ENCODE measurements at regions of chr1 and their contacts with region 1.

Region 1: GRCh38 chr1:205248793-205249601 is 21.3 kb downstream of the TMCC2 start:
- DNase-seq: no peak
- H3K4me3 ChIP-seq: no peak overlapping the region
- H3K4me3 Mint-ChIP-seq: no peak overlapping the region
- H3K27ac ChIP-seq: no peak overlapping the region
- H3K27ac Mint-ChIP-seq: no peak overlapping the region
- H3K4me1 ChIP-seq: no peaks in the 10 kb centered on the region
- H3K4me1 Mint-ChIP-seq: peaks cover 1% of the 10 kb centered on the region
- H3K27me3 ChIP-seq: no peaks in the 10 kb centered on the region
- H3K27me3 Mint-ChIP-seq: peaks cover 0 to 9% (median 2%) of the 10 kb centered on the region in 3 donors
- CTCF ChIP-seq: no peak

Region 2: DNA sequence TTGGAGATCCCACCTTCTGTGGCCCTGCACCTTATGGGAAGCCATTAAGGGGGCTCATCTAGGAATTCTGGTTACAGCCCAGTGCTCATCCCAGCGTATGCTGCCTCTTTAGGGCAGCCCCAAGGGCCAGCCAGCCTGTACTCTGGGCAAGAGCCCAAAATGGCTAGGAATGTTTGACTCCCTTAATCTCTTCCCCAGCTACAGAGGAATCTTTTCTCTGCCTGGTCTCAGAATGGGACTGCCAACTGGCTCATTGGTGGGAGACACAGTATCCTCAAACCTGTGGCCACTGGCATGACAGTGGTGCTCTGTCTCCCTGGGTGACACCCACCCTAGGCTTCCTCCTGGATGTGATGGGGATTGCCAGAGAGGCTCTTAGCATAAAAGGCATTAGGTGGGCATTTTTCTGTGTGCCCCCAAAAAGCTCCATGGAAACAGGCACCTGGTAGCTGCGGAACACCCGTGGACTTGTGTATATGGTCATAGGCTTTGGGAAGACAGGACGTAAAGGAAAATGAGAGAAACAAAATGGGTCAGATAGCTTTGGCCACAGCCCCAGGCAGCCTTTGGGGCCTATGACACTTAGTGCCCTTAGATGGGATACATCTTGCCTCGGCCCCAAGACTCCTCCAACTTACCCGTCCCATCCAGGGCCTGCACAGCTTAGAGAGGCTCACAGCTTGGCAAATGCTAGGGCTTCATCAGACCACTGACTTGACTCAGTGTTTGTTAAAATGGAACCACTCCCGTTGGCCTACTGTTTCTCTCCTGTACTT is 171.7 kb before region 1 on chr1:
- intact Hi-C with region 1: no loop called
- DNase-seq: no peak
- H3K4me3 ChIP-seq: no peak overlapping the region
- H3K4me3 Mint-ChIP-seq: no peak overlapping the region
- H3K27ac ChIP-seq: no peak overlapping the region
- H3K27ac Mint-ChIP-seq: no peak overlapping the region
- H3K4me1 ChIP-seq: no peaks in the 10 kb centered on the region
- H3K4me1 Mint-ChIP-seq: no peaks in the 10 kb centered on the region
- H3K27me3 ChIP-seq: no peaks in the 10 kb centered on the region
- H3K27me3 Mint-ChIP-seq: peaks cover 0 to 2% (median 0%) of the 10 kb centered on the region in 3 donors
- CTCF ChIP-seq: no peak

Region 3: GRCh38 chr1:205199090-205199930 is 49.7 kb before region 1 on chr1:
- intact Hi-C with region 1: loop called in 1 of 2 experiments (anchors 10 kb)
- DNase-seq: no peak
- H3K4me3 ChIP-seq: no peak overlapping the region
- H3K4me3 Mint-ChIP-seq: no peak overlapping the region
- H3K27ac ChIP-seq: no peak overlapping the region
- H3K27ac Mint-ChIP-seq: peak overlapping the region in 1 of 7 donors; percentile 65
- H3K4me1 ChIP-seq: no peaks in the 10 kb centered on the region
- H3K4me1 Mint-ChIP-seq: peaks cover 14% of the 10 kb centered on the region
- H3K27me3 ChIP-seq: no peaks in the 10 kb centered on the region
- H3K27me3 Mint-ChIP-seq: no peaks in the 10 kb centered on the region
- CTCF ChIP-seq: no peak

Region 4: DNA sequence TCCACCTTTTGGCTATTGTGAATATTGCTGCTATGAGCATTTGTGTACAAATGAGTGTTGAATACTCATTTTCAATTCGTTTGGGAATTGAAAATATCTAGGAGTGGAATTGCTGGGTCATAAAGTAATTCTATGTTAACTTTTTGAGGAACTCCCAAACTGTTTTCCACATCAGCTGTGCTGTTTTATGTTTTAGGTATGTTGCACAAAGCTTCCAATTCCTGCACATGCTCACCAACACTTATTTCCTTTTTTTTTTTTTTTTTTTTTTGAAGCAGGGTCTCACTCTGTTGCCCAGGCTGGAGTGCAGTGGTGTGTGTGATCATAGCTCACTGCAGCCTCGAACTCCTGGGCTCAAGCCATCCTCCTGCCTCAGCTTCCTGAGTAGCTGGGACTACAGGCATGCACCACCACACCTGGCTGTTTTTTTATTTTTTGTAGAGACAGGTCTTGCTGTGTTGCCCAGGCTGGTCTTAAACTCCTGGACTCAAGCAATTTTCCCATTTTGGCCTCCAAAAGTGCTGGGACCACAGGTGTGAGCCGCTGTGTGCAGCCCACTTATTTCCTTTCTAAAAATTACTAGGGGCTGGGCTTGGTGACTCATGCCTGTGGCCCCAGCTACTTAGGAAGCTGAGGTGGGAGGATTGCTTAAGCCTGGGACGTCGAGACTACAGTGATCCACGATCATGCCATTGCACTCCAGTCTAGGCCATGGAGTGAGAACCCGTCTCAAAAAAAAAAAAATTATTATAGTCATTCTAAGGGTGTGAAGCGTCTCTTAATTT is 12.1 kb after region 1 on chr1:
- intact Hi-C with region 1: no loop called
- DNase-seq: peak; percentile 41 to 72 (median 70)
- H3K4me3 ChIP-seq: no peak overlapping the region
- H3K4me3 Mint-ChIP-seq: no peak overlapping the region
- H3K27ac ChIP-seq: no peak overlapping the region
- H3K27ac Mint-ChIP-seq: peak overlapping the region in 2 of 7 donors; percentile 45 to 68
- H3K4me1 ChIP-seq: peaks cover 28 to 39% of the 10 kb centered on the region in 2 donors
- H3K4me1 Mint-ChIP-seq: peaks cover 36% of the 10 kb centered on the region
- H3K27me3 ChIP-seq: peaks cover 0 to 3% of the 10 kb centered on the region in 2 donors
- H3K27me3 Mint-ChIP-seq: peaks cover 17 to 33% (median 18%) of the 10 kb centered on the region in 3 donors
- CTCF ChIP-seq: no peak